ENCODE measurements at regions of chr1 and their contacts with region 1.

Region 1: DNA sequence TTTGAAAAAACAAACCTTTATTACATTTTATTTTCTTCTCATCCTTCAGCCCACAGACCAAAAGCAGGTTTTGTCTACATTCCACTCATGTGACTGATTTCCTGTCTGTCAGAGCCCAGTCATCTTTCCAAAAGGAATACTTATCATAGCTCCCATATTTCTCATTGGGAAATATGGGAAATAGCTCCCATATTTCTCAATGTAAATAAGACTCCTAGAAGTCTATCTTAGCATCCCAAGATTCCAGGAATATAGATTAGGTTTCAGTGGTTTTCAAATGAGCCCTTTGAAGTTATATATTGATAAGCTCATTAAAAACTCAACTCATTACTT is 19.1 kb upstream of the NRDC start:
- DNase-seq: no peak
- CTCF ChIP-seq: no peak

Region 2: GRCh38 chr1:51878616-51879336 is 18.9 kb before region 1 on chr1 and contains the start of gene NRDC:
- CTCF ChIA-PET with region 1: interaction called, 18 read pairs
- POLR2A ChIA-PET with region 1: no interaction called
- DNase-seq: peak; percentile 97
- CTCF ChIP-seq: no peak

Region 3: GRCh38 chr1:51916587-51917405 is 19.1 kb after region 1 on chr1:
- CTCF ChIA-PET with region 1: interaction called, 20 read pairs
- POLR2A ChIA-PET with region 1: no interaction called
- DNase-seq: no peak
- CTCF ChIP-seq: no peak

Region 4: DNA sequence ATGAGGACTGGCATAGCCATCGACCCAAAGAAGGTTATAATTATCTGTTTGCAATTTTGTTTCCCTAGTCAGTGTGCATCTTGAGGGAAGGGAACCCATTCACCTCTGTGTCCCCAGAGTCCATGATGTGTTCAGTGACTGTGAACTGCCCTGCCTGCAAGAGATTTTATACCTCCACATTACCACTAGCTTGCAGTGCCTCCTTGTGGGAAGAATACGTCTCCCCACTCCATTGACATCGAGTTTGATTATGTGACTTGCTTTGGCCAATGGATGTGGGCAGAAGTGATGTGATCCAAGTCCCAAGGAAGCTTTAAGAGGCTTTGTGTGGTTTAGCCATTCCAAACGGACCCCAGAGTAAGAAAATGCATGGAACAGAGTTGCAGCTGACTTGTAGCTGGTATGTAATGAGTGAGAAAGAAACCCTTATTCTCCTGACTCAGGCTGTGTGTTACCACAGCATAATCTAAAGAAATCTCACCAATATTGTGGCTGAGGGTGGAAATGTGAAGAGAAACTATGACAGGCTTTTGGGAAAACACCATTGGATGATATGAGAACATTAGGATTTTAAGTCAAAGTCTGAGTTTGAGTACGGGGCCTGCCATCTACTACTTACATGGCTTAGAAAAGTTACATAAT is 28.6 kb after region 1 on chr1:
- CTCF ChIA-PET with region 1: interaction called, 13 read pairs
- POLR2A ChIA-PET with region 1: no interaction called
- DNase-seq: no peak
- CTCF ChIP-seq: peak; percentile 18

Region 5: DNA sequence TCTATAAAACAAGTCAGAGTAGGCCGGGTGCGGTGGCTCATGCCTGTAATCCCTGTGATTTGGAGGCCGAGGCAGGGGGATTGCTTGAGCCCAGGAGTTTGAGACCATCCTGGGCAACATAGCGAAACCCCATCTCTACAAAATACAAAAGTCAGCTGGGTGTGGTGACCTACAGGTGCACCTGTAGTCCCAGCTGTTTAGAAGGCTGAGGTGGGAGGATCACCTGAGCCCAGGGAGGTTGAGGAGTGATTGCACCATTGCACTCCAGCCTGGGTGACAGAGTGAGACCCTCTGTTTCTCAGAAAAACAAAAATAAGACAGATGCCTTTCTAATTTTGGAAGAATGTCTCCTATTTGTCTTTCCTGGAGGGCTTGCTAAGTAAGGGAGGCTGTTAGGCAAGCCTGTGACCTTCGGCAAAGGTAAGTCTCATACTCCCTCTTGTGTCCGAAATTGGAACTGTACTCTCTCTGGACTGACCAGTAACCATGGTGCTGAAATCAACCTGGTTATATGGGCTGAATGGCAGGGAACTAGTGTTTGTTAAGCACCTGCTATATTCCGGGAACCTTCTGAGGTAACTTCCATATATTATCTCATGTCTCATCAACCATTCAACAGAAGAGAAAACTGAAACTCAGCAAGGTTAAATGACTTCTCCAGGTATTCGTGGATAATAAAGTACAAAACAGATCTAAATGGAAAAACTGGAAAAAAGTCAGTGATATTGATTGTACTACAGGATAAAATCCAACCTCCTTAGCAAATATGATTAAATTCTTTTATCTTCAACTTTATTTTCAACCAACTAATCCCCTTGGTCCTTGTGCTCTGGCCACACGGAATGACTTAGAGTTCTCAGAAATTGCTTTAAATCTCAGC is 104.6 kb after region 1 on chr1:
- CTCF ChIA-PET with region 1: interaction called, 85 read pairs
- POLR2A ChIA-PET with region 1: no interaction called
- DNase-seq: peak; percentile 85
- CTCF ChIP-seq: peak; percentile 84

Measured in GM10248 (cell line).